Activated naive CD4-positive, alpha-beta T cell treated with anti-CD3 and anti-CD28 coated beads for 36 hours (primary cell): ENCODE measurements at regions of chr9 and their contacts with region 1.

Region 1: GRCh38 chr9:76023715-76024195 is 133.3 kb downstream of the PCSK5 start:
- DNase-seq: peak; percentile 64
- H3K4me3 Mint-ChIP-seq: peak overlapping the region; percentile 68
- H3K27ac Mint-ChIP-seq: peak overlapping the region; percentile 83
- H3K4me1 Mint-ChIP-seq: peaks cover 92% of the 10 kb centered on the region
- H3K27me3 Mint-ChIP-seq: no peaks in the 10 kb centered on the region

Region 2: DNA sequence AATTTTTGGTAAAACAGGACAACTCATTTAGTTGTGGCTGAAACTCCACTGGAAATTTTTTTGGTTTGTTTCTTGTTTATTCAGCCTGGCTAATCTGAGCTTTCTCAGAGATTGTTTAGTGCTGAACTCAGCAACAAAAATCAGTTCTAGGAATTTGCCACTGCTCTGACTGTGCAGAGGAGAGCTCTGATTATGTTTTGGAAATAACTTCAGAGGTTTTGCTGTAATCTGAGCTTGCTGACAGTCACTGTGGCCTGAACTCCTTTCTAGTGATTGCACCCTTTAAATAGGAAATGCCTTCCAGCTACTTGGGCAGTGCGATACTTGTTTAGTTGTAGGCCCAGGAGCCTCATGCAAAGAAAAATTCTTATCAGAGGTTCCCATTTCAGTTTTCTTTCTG is 875.2 kb before region 1 on chr9:
- CTCF ChIA-PET with region 1: no interaction called
- intact Hi-C with region 1: loop called (anchors 5 kb)
- DNase-seq: peak; percentile 32
- H3K4me3 Mint-ChIP-seq: no peak overlapping the region
- H3K27ac Mint-ChIP-seq: peak overlapping the region; percentile 83
- H3K4me1 Mint-ChIP-seq: peaks cover 64% of the 10 kb centered on the region
- H3K27me3 Mint-ChIP-seq: no peaks in the 10 kb centered on the region

Region 3: GRCh38 chr9:76044266-76044819 is 20.6 kb after region 1 on chr9:
- CTCF ChIA-PET with region 1: no interaction called
- intact Hi-C with region 1: no loop called
- DNase-seq: no peak
- H3K4me3 Mint-ChIP-seq: no peak overlapping the region
- H3K27ac Mint-ChIP-seq: no peak overlapping the region
- H3K4me1 Mint-ChIP-seq: peaks cover 4% of the 10 kb centered on the region
- H3K27me3 Mint-ChIP-seq: no peaks in the 10 kb centered on the region

Region 4: DNA sequence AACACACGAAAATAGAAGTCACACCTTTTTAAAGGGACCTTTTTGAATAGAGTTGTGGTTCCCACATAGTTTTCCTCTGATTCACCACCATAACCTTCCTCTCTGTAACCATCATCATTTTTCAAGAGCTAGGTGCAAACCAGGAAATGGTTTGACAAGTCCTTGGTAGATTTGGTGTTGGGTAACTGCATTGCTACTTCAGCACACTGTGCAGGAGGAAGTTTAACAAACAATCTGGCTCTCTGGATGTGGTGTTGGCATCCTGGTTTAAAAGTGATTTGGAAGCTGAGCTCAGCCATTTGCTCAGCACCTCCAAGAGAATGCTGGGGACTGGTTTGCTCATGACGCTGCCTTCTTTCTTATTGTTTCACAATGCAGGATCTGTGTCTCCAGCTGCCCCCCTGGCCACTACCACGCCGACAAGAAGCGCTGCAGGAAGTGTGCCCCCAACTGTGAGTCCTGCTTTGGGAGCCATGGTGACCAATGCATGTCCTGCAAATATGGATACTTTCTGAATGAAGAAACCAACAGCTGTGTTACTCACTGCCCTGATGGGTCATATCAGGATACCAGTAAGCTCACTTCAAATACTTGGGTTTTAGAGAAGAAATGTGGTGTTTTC is 157.4 kb after region 1 on chr9:
- CTCF ChIA-PET with region 1: no interaction called
- intact Hi-C with region 1: loop called (anchors 1 kb)
- DNase-seq: peak; percentile 10
- H3K4me3 Mint-ChIP-seq: no peak overlapping the region
- H3K27ac Mint-ChIP-seq: no peak overlapping the region
- H3K4me1 Mint-ChIP-seq: peaks cover 14% of the 10 kb centered on the region
- H3K27me3 Mint-ChIP-seq: no peaks in the 10 kb centered on the region

Region 5: GRCh38 chr9:76297721-76298239 is 274.0 kb after region 1 on chr9:
- CTCF ChIA-PET with region 1: interaction called, 7 read pairs
- intact Hi-C with region 1: loop called (anchors 1 kb)
- DNase-seq: no peak
- H3K4me3 Mint-ChIP-seq: no peak overlapping the region
- H3K27ac Mint-ChIP-seq: no peak overlapping the region
- H3K4me1 Mint-ChIP-seq: peaks cover 4% of the 10 kb centered on the region
- H3K27me3 Mint-ChIP-seq: no peaks in the 10 kb centered on the region